AG04449 (cell line): ENCODE measurements at regions of chr9 and their contacts with region 1.

Region 1: GRCh38 chr9:114155263-114155972 is at the start of gene COL27A1:
- DNase-seq: no peak
- H3K4me3 ChIP-seq: peak within 1 kb of the TSS; percentile 73
- CTCF ChIP-seq: peak; percentile 98

Region 2: DNA sequence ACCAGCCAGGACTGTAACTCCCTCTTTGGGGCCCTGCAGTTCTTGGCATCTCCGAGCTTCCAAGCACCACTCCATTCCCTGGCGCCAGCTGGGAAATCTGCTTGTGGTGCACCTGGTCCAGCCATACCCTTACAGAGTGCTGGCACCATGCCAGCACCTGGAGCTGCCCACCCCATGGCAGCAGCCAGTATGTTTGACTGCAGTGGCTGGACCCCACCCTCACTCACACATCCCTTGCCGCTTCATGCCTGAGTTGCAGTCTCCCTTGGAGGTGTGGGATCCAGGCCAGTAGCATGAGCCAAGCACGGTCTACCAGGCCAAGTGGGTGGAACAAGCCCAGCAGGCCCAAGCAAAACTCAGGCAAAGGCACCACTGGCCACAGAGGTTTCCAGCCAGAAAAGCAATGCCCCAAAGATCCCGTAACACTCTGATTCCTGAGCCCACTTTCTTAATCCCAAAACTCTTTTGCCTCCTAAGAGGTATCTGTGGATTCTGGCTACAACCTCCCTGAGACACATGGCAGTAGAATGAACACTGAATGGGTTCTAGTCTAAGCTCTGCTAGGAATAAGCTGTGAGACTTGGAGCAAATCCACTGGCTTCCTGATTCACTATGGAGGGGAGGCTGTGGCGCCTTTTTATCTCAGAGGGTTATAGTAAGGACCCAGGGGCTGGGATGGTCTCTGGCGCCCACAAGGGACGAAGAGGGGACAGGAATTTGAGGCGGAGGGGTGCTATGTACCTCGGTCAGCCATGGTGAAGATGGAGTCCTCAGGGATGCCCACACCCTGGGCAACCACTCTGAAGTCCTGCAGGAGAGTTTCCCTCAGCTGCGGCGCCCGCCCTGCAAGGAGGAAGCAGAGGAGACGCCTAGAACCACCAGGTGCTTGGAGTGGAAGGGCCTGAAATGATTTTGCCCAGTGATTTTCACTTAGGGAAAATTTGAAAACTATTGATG is 83.0 kb before region 1 on chr9:
- CTCF ChIA-PET with region 1: no interaction called
- POLR2A ChIA-PET with region 1: no interaction called
- DNase-seq: no peak
- H3K4me3 ChIP-seq: no peak overlapping the region
- CTCF ChIP-seq: no peak

Region 3: DNA sequence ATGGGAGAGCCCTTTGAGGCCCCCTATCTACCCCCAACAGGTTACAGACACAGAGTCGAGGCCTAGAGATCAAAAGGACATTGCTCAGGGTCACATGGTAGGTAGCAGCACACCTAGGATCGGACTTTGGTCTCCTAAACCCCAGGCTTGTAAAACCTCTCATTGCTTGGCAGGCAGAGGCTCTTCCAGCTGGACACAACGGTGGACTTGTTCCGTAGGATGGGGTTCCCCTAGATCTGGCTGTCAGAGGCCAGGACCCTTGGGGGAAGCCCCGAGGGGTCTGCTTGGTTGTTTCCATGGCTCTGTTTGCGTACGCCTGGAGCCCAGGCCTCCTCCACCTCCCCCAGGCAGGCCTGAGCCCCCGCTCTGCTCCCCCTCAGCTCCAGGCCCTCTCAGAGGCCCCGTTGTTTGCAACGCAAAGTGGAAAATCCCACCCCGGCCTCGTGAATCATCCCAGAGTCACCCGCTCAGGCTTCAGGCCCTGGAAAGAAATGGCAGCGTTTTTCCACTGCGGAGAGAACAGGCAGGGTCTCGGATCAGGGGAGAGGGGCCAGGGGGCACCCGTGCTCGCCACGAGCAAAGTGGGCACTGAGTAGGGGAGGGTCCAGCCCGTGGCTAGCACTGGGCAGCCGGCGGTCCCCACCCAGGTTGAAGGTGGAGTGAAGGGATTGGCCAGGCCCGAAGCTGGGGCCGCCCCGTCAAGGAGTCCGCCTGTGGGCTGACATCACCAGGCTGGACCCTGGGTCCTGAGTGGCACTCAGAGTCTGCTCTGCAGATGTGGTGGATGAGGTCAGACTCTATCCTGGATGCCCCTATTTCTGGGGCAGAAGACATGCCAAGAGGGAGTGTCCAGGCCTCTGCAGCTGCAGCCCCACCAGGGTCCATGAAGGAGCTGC is 19.7 kb after region 1 on chr9:
- CTCF ChIA-PET with region 1: interaction called, 54 read pairs
- POLR2A ChIA-PET with region 1: interaction called, 4 read pairs
- DNase-seq: no peak
- H3K4me3 ChIP-seq: no peak overlapping the region
- CTCF ChIP-seq: no peak

Region 4: GRCh38 chr9:114196117-114196516 is 40.7 kb after region 1 on chr9:
- CTCF ChIA-PET with region 1: no interaction called
- POLR2A ChIA-PET with region 1: no interaction called
- DNase-seq: no peak
- H3K4me3 ChIP-seq: no peak overlapping the region
- CTCF ChIP-seq: no peak

Region 5: DNA sequence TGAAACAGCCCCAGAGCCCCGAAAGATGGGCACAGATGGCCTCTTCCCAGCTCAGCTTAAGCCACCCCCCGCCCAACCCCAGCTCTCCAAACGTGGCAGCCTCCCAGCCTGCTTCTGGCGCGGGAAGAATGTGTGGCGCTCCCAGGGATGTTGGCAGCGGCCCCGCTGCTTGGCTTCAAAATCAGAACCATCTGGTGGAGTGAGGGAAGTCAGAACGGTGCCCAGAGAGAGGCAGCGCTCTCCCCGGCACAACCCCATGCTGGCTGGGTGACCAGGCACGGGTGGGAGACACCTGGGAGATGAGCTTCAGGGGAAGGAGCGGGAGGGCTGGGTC is 94.8 kb after region 1 on chr9:
- CTCF ChIA-PET with region 1: interaction called, 10 read pairs
- POLR2A ChIA-PET with region 1: no interaction called
- DNase-seq: peak; percentile 73
- H3K4me3 ChIP-seq: no peak overlapping the region
- CTCF ChIP-seq: no peak

Region 6: GRCh38 chr9:114271641-114272081 is 116.2 kb after region 1 on chr9:
- CTCF ChIA-PET with region 1: interaction called, 32 read pairs
- POLR2A ChIA-PET with region 1: no interaction called
- DNase-seq: no peak
- H3K4me3 ChIP-seq: no peak overlapping the region
- CTCF ChIP-seq: peak; percentile 48

Region 7: GRCh38 chr9:114304416-114305188 is 149.2 kb after region 1 on chr9:
- CTCF ChIA-PET with region 1: interaction called, 10 read pairs
- POLR2A ChIA-PET with region 1: no interaction called
- DNase-seq: no peak
- H3K4me3 ChIP-seq: no peak overlapping the region
- CTCF ChIP-seq: no peak

Region 8: DNA sequence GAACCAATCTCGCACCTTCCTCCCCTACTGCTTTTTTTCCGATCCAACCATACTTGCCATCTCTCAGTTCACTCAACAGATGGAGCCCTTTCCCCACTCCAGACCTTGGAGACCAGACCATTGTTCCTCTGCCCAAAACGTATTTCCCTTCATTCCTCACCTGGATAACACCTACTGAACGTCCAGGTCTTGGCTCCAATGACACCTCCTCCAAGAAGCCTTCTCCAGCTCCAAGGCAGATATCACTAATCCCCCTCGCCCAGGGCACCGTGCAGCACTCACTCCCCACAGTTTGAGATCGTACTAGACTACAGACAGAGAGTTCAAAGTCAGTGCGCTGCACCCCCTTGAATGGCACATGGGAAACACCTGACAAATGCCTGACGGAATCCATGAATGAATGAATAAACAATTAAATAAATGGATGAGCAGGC is 279.5 kb after region 1 on chr9:
- CTCF ChIA-PET with region 1: no interaction called
- POLR2A ChIA-PET with region 1: no interaction called
- DNase-seq: no peak
- H3K4me3 ChIP-seq: no peak overlapping the region
- CTCF ChIP-seq: peak; percentile 66